ENCODE measurements at regions of chr1 and their contacts with region 1.

Region 1: GRCh38 chr1:157963713-157964112 is 29.7 kb upstream of the KIRREL1 start:
- DNase-seq: peak; percentile 61 to 68
- ATAC-seq: peak; percentile 67 to 87
- H3K4me3 ChIP-seq: no peak overlapping the region
- H3K27ac ChIP-seq: peak overlapping the region in 1 of 2 experiments; percentile 40; a peak in 2 of 6 replicates
- H3K4me1 ChIP-seq: peaks cover 46% of the 10 kb centered on the region
- CTCF ChIP-seq: peak; percentile 96
- EP300 ChIP-seq: no peak
- POLR2A ChIP-seq: no peak
- RAD21 ChIP-seq: peak; percentile 97 to 98

Region 2: GRCh38 chr1:157359309-157360022 is 604.2 kb before region 1 on chr1:
- CTCF ChIA-PET with region 1: no interaction called
- POLR2A ChIA-PET with region 1: no interaction called
- DNase-seq: no peak
- ATAC-seq: no peak
- H3K4me3 ChIP-seq: no peak overlapping the region
- H3K27ac ChIP-seq: no peak overlapping the region
- H3K4me1 ChIP-seq: no peaks in the 10 kb centered on the region
- CTCF ChIP-seq: no peak
- EP300 ChIP-seq: no peak
- POLR2A ChIP-seq: no peak
- RAD21 ChIP-seq: no peak

Region 3: GRCh38 chr1:157978586-157979403 is 15.1 kb after region 1 on chr1:
- CTCF ChIA-PET with region 1: interaction called, 59 read pairs
- POLR2A ChIA-PET with region 1: no interaction called
- DNase-seq: no peak
- ATAC-seq: no peak
- H3K4me3 ChIP-seq: no peak overlapping the region
- H3K27ac ChIP-seq: no peak overlapping the region
- H3K4me1 ChIP-seq: no peaks in the 10 kb centered on the region
- CTCF ChIP-seq: no peak
- EP300 ChIP-seq: no peak
- POLR2A ChIP-seq: no peak
- RAD21 ChIP-seq: no peak

Region 4: GRCh38 chr1:158025576-158026230 is 62.0 kb after region 1 on chr1:
- CTCF ChIA-PET with region 1: interaction called, 12 read pairs
- POLR2A ChIA-PET with region 1: no interaction called
- DNase-seq: no peak
- ATAC-seq: peak in 1 of 2 experiments; percentile 15; a peak in 2 of 6 replicates
- H3K4me3 ChIP-seq: no peak overlapping the region
- H3K27ac ChIP-seq: peak overlapping the region in 1 of 2 experiments; percentile 73; a peak in 3 of 6 replicates
- H3K4me1 ChIP-seq: peaks cover 78% of the 10 kb centered on the region
- CTCF ChIP-seq: no peak
- EP300 ChIP-seq: no peak
- POLR2A ChIP-seq: no peak
- RAD21 ChIP-seq: no peak

Region 5: GRCh38 chr1:158075078-158075477 is 111.4 kb after region 1 on chr1:
- CTCF ChIA-PET with region 1: interaction called, 10 read pairs
- POLR2A ChIA-PET with region 1: no interaction called
- DNase-seq: no peak
- ATAC-seq: no peak
- H3K4me3 ChIP-seq: no peak overlapping the region
- H3K27ac ChIP-seq: no peak overlapping the region
- H3K4me1 ChIP-seq: no peaks in the 10 kb centered on the region
- CTCF ChIP-seq: no peak
- EP300 ChIP-seq: no peak
- POLR2A ChIP-seq: no peak
- RAD21 ChIP-seq: no peak

Region 6: GRCh38 chr1:158124999-158125398 is 161.3 kb after region 1 on chr1:
- CTCF ChIA-PET with region 1: interaction called, 2,212 read pairs
- POLR2A ChIA-PET with region 1: no interaction called
- DNase-seq: peak; percentile 81 to 91
- ATAC-seq: peak; percentile 93 to 95
- H3K4me3 ChIP-seq: no peak overlapping the region
- H3K27ac ChIP-seq: no peak overlapping the region
- H3K4me1 ChIP-seq: no peaks in the 10 kb centered on the region
- CTCF ChIP-seq: peak; percentile 92
- EP300 ChIP-seq: no peak
- POLR2A ChIP-seq: no peak
- RAD21 ChIP-seq: peak; percentile 95 to 99

Measured in A549 (cell line).